ENCODE measurements at regions of chr6 and their contacts with region 1.

Region 1: DNA sequence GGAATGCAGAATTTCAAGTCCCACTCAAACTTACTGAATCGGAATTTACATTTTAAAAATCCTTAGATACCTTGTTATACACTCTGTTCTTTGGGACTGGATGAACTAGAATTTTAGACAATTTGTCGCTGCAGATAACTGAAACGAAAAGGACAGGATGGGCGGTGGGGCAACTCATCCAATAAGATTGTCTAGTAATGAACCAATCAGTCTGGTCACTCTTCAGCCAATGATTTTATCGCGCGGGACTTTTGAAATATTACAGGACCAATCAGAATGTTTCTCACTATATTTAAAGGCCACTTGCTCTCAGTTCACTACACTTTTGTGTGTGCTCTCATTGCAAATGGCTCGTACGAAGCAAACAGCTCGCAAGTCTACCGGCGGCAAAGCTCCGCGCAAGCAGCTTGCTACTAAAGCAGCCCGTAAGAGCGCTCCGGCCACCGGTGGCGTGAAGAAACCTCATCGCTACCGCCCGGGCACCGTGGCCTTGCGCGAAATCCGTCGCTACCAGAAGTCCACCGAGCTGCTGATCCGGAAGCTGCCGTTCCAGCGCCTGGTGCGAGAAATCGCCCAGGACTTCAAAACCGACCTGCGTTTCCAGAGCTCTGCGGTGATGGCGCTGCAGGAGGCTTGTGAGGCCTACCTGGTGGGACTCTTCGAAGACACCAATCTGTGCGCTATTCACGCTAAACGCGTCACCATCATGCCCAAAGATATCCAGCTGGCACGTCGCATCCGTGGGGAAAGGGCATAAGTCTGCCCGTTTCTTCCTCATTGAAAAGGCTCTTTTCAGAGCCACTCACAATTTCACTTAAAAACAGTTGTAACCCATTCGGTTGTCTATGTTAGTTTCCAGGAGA is 41.9 kb upstream of the HFE start:
- DNase-seq: peak; percentile 98
- ATAC-seq: peak; percentile 57
- H3K4me3 ChIP-seq: peak overlapping the region; percentile 71
- H3K27ac ChIP-seq: peak overlapping the region; percentile 74
- H3K4me1 ChIP-seq: peaks cover 21% of the 10 kb centered on the region
- H3K27me3 ChIP-seq: no peaks in the 10 kb centered on the region
- CTCF ChIP-seq: peak; percentile 36; the same call in 1 of the 2 replicates

Region 2: GRCh38 chr6:24391756-24392405 is 1653.4 kb before region 1 on chr6:
- CTCF ChIA-PET with region 1: no interaction called
- POLR2A ChIA-PET with region 1: interaction called, 23 read pairs
- intact Hi-C with region 1: no loop called
- DNase-seq: no peak
- ATAC-seq: no peak
- H3K4me3 ChIP-seq: no peak overlapping the region
- H3K27ac ChIP-seq: no peak overlapping the region
- H3K4me1 ChIP-seq: peaks cover 8% of the 10 kb centered on the region
- H3K27me3 ChIP-seq: no peaks in the 10 kb centered on the region
- CTCF ChIP-seq: no peak

Region 3: GRCh38 chr6:26025894-26026832 is 19.1 kb before region 1 on chr6:
- CTCF ChIA-PET with region 1: interaction called, 16 read pairs
- POLR2A ChIA-PET with region 1: interaction called, 72 read pairs
- intact Hi-C with region 1: loop called (anchors 1 kb)
- DNase-seq: peak; percentile 96
- ATAC-seq: peak; percentile 37
- H3K4me3 ChIP-seq: peak overlapping the region; percentile 73
- H3K27ac ChIP-seq: peak overlapping the region; percentile 56
- H3K4me1 ChIP-seq: peaks cover 60% of the 10 kb centered on the region
- H3K27me3 ChIP-seq: no peaks in the 10 kb centered on the region
- CTCF ChIP-seq: peak; percentile 85

Region 4: GRCh38 chr6:26031595-26032339 is 13.5 kb before region 1 on chr6:
- CTCF ChIA-PET with region 1: interaction called, 16 read pairs
- POLR2A ChIA-PET with region 1: interaction called, 72 read pairs
- intact Hi-C with region 1: loop called (anchors 1 kb)
- DNase-seq: peak; percentile 99
- ATAC-seq: peak; percentile 60
- H3K4me3 ChIP-seq: peak overlapping the region; percentile 83
- H3K27ac ChIP-seq: peak overlapping the region; percentile 82
- H3K4me1 ChIP-seq: peaks cover 40% of the 10 kb centered on the region
- H3K27me3 ChIP-seq: no peaks in the 10 kb centered on the region
- CTCF ChIP-seq: no peak

Region 5: DNA sequence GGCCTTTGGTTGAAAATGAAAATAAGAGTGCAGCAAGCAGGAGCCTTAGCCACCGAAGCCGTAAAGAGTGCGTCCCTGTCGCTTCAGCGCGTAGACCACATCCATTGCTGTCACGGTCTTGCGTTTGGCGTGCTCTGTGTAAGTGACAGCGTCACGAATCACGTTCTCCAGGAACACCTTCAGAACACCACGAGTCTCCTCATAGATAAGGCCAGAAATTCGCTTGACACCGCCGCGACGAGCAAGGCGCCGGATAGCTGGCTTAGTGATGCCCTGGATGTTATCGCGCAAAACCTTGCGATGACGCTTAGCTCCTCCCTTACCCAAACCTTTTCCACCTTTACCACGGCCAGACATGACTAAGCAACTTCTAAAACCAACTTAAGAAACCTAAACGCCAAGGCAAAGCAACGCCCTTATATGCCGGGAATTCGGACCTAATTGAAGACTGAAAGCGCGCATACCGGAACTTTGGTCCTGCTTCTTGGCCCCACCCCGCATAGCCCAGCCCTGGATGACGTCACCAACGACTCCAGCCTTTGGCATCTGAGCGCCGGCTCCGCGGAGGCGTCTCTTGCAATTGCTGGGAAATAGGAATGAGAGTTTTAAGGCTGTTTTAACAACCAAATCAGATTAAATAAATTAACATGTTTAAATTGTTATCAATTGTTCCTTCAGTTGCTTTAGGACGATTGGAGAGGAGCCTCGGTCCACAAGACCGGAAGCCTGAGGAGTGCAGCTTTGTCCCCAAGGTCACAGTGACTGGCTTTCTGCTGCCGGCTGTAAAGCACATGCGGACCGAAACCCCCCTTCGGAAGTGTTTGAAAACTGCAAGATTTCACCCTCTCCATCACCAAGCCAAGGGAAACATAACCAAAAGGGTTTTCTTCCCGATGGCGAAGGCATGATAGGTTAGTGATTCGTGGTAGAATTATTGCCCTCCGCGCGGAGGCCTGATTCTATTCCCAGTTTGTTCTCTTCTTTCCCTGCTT is 240.1 kb after region 1 on chr6:
- CTCF ChIA-PET with region 1: no interaction called
- POLR2A ChIA-PET with region 1: no interaction called
- intact Hi-C with region 1: loop called (anchors 5 kb)
- DNase-seq: peak; percentile 100
- ATAC-seq: peak; percentile 77
- H3K4me3 ChIP-seq: peak overlapping the region; percentile 92
- H3K27ac ChIP-seq: peak overlapping the region; percentile 94
- H3K4me1 ChIP-seq: peaks cover 19% of the 10 kb centered on the region
- H3K27me3 ChIP-seq: no peaks in the 10 kb centered on the region
- CTCF ChIP-seq: no peak

Measured in PC-3 (cell line).